Endothelial cell of umbilical vein (primary cell): ENCODE measurements at regions of chr1 and their contacts with region 1.

Region 1: GRCh38 chr1:12001249-12001917 is 17.9 kb upstream of the MIIP start:
- DNase-seq: no peak
- H3K4me3 ChIP-seq: no peak overlapping the region
- H3K27ac ChIP-seq: no peak overlapping the region
- H3K4me1 ChIP-seq: no peaks in the 10 kb centered on the region
- H3K27me3 ChIP-seq: no peaks in the 10 kb centered on the region
- CTCF ChIP-seq: peak; percentile 46 to 61
- POLR2A ChIP-seq: no peak

Region 2: DNA sequence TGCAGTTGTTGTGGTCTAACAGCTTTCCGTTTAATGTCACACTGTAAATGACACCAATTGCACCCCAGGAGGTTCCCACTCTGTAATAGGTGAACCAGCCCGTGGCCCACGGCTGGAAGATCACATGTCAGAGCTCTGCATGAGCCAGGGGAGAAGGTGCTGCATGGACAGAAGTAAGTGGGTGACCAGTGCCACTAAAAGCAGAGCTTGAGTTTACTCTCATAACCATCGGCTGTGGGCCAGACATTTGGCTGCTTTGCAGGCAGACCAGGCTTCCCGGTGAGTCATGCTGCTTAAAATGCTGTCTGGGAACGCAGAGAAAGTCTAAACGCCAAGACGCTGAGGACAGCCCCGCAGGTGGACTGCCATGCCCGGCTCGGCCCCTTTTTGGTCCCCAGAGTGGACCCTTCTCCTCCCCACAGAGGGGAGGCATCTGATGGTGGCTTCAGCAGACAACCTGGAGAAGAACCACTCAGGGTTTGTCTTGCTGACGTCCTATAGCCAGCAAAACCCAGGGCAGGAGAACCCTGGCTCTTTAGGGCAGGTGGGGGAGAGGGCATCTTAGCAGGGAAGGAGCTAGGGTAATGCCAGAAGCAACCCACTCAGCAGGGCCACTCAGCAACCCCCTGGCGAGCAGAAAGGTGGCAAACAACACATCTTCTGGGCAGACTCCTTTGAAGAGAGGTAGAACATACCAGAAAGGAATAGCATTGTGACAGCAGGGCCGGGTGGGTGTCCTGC is 82.4 kb before region 1 on chr1:
- CTCF ChIA-PET with region 1: no interaction called
- POLR2A ChIA-PET with region 1: no interaction called
- dilution Hi-C with region 1: no loop called
- intact Hi-C with region 1: no loop called
- DNase-seq: no peak
- H3K4me3 ChIP-seq: no peak overlapping the region
- H3K27ac ChIP-seq: no peak overlapping the region
- H3K4me1 ChIP-seq: peaks cover 3% of the 10 kb centered on the region
- H3K27me3 ChIP-seq: no peaks in the 10 kb centered on the region
- CTCF ChIP-seq: no peak
- POLR2A ChIP-seq: no peak

Region 3: DNA sequence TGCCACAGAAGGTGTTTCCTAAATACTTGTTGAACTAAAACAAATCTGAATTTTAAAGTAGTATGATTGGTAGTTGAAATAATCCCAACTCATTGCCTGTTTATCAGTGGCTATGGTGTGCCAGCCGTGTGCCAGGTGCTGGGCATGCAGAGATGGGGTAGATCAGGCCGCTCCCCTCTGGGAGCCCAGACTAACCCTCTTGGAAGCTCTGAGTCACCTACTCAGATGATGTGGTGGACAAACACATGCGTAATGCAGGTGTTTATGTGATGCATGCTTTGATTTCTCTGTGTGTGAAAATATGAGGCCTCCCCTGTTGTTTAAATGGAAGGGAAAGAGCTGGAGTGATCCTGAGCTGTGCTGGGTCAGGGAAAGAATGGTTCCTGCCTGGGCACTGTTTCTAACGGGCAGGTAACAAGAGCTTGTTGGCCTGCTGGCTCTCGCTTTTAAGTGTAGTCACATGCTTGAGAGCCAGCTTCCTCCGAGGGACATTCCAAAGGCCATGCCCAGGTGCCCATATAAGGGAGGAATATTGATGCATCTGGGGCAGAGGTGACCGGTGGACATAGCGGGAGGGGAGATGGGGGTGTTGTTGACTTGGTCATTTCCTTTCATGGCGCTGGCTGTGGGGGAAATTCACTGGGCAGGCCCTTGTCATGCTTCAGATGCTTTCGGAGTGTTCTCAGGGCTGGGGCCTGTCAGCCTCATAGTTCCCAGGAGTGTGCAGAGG is 10.9 kb before region 1 on chr1:
- CTCF ChIA-PET with region 1: no interaction called
- POLR2A ChIA-PET with region 1: no interaction called
- dilution Hi-C with region 1: no loop called
- intact Hi-C with region 1: no loop called
- DNase-seq: no peak
- H3K4me3 ChIP-seq: no peak overlapping the region
- H3K27ac ChIP-seq: no peak overlapping the region
- H3K4me1 ChIP-seq: peaks cover 9% of the 10 kb centered on the region
- H3K27me3 ChIP-seq: no peaks in the 10 kb centered on the region
- CTCF ChIP-seq: no peak
- POLR2A ChIP-seq: no peak

Region 4: GRCh38 chr1:12031039-12031980 is 29.9 kb after region 1 on chr1:
- CTCF ChIA-PET with region 1: no interaction called
- POLR2A ChIA-PET with region 1: no interaction called
- dilution Hi-C with region 1: no loop called
- intact Hi-C with region 1: loop called (anchors 1 kb)
- DNase-seq: peak; percentile 16
- H3K4me3 ChIP-seq: no peak overlapping the region
- H3K27ac ChIP-seq: no peak overlapping the region
- H3K4me1 ChIP-seq: no peaks in the 10 kb centered on the region
- H3K27me3 ChIP-seq: no peaks in the 10 kb centered on the region
- CTCF ChIP-seq: peak; percentile 45 to 70
- POLR2A ChIP-seq: no peak

Region 5: DNA sequence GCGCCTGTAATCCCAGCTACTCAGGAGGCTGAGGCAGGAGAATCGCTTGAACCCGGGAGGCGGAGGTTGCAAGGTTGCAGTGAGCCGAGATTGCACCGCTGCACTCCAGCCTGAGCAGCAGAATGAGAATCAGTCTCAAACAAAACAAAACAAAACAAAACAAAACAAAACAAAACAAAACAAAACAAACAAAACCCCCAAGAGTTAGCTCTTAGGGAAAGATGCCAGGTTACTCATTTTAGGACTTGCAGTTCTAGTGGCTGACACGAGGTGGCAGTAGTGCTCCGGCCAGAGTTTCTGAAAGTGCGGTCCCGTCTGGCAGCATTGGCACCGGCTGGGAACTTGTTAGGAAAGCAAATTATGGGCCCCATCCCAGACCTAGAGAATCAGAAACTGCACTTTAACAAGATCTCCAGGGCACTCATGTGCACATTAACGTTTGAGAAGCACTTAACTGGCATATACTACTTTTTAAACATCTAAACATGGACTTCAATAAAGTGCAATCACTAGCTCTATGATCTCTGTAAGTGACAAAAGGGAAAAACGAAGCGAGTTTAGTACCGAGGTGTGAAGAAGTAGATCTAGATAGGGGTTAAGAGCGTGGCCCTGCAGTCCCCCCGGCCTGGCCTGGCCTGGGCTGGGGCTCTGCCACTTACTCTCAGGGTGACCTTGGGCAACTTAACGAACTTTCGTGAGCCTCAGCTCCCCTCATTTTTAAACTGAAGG is 123.5 kb after region 1 on chr1:
- CTCF ChIA-PET with region 1: no interaction called
- POLR2A ChIA-PET with region 1: no interaction called
- dilution Hi-C with region 1: no loop called
- intact Hi-C with region 1: no loop called
- DNase-seq: peak; percentile 77
- H3K4me3 ChIP-seq: no peak overlapping the region
- H3K27ac ChIP-seq: no peak overlapping the region
- H3K4me1 ChIP-seq: peaks cover 9% of the 10 kb centered on the region
- H3K27me3 ChIP-seq: peaks cover 0 to 3% of the 10 kb centered on the region in 2 experiments
- CTCF ChIP-seq: peak; percentile 77 to 91
- POLR2A ChIP-seq: no peak